ENCODE measurements at regions of chr11 and their contacts with region 1.

Region 1: DNA sequence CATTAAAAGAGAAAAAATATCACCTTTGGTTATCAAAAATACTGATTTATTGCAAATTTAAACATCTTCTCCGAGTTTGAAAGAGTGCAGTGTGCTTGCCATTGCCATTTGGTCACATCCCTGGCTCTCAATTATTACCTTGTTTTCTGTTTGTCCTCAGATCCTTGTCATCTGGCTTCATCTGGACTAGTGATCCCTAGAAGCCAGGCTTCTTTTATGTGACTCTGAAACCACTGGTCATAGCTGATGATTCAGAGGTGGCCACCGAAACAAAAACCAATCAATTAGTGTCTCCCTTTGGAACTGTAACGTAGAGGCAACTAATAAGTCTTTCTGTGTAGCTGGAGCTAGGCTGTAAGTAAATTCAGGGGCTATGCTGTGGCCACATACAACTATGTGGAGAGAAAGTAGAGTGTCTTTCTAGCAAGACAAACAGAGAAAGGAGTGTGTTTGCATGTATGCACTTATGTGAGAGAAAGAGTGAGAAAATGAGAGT is 237.9 kb downstream of the LUZP2 start:
- DNase-seq: no peak
- H3K4me3 ChIP-seq: no peak overlapping the region
- H3K27ac ChIP-seq: no peak overlapping the region
- H3K27me3 ChIP-seq: no peaks in the 10 kb centered on the region
- CTCF ChIP-seq: no peak

Region 2: GRCh38 chr11:24773309-24773708 is 38.5 kb after region 1 on chr11:
- CTCF ChIA-PET with region 1: no interaction called
- POLR2A ChIA-PET with region 1: no interaction called
- DNase-seq: no peak
- H3K4me3 ChIP-seq: no peak overlapping the region
- H3K27ac ChIP-seq: no peak overlapping the region
- H3K27me3 ChIP-seq: no peaks in the 10 kb centered on the region
- CTCF ChIP-seq: no peak

Region 3: GRCh38 chr11:25633231-25633630 is 898.4 kb after region 1 on chr11:
- CTCF ChIA-PET with region 1: interaction called, 10 read pairs
- POLR2A ChIA-PET with region 1: no interaction called
- DNase-seq: no peak
- H3K4me3 ChIP-seq: no peak overlapping the region
- H3K27ac ChIP-seq: no peak overlapping the region
- H3K27me3 ChIP-seq: no peaks in the 10 kb centered on the region
- CTCF ChIP-seq: no peak

Measured in AG04450 (cell line).